SK-N-SH (cell line): ENCODE measurements at regions of chr12 and their contacts with region 1.

Region 1: GRCh38 chr12:66352197-66352596 is 49.9 kb downstream of the HELB start:
- DNase-seq: peak; percentile 41
- H3K4me3 ChIP-seq: no peak overlapping the region; a peak in 1 of 4 replicates
- H3K27ac ChIP-seq: no peak overlapping the region
- H3K4me1 ChIP-seq: peaks cover 0 to 8% of the 10 kb centered on the region in 2 experiments; a peak in 1 of 4 replicates
- H3K27me3 ChIP-seq: no peaks in the 10 kb centered on the region
- CTCF ChIP-seq: peak; percentile 53
- EP300 ChIP-seq: no peak
- RAD21 ChIP-seq: peak; percentile 78

Region 2: DNA sequence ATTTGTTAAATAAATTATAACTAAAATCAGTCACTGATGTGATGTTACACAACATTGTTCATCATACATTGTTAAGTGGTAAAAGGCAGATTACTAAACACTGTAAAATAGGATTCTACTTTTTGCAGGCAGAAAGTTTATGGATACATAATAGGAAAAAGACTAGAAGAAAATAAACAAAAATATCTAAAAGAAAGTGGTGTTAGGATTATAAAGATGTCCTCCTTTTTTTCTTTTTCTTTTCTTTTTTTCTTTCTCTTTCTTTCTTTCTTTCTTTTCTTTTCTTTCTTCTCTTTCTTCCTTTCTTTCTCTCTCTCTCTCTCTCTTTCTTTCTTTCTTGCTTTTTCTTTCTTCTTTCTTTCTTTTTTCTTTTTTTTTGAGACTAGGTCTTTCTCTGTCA is 89.5 kb before region 1 on chr12:
- CTCF ChIA-PET with region 1: no interaction called
- POLR2A ChIA-PET with region 1: no interaction called
- DNase-seq: no peak
- H3K4me3 ChIP-seq: no peak overlapping the region
- H3K27ac ChIP-seq: no peak overlapping the region
- H3K4me1 ChIP-seq: no peaks in the 10 kb centered on the region
- H3K27me3 ChIP-seq: peaks cover 4% of the 10 kb centered on the region; the same call in 1 of the 2 replicates
- CTCF ChIP-seq: no peak
- EP300 ChIP-seq: no peak
- RAD21 ChIP-seq: no peak

Region 3: GRCh38 chr12:66365718-66366490 is 13.7 kb after region 1 on chr12:
- CTCF ChIA-PET with region 1: interaction called, 16 read pairs
- POLR2A ChIA-PET with region 1: no interaction called
- DNase-seq: no peak
- H3K4me3 ChIP-seq: no peak overlapping the region
- H3K27ac ChIP-seq: no peak overlapping the region
- H3K4me1 ChIP-seq: peaks cover 0 to 21% of the 10 kb centered on the region in 2 experiments; a peak in 1 of 4 replicates
- H3K27me3 ChIP-seq: no peaks in the 10 kb centered on the region
- CTCF ChIP-seq: no peak
- EP300 ChIP-seq: no peak
- RAD21 ChIP-seq: no peak

Region 4: DNA sequence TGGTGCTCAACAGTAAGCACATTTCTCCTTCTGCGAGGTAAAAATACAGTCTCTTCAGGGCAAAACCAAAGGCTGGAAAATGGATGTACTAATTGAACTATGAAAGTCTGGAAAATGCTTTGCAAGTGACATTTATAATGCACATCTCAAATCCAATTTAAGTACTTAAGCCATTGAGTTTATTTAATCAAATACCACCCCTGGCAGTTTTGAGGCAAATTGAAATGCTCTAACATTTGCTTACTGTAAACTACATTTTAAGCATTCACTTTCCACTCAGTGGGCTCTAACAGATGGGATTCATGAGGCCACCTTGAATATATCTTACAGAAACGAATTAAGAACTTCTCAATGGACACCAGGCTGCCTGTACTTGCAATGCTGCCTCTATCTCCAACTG is 19.8 kb after region 1 on chr12:
- CTCF ChIA-PET with region 1: interaction called, 15 read pairs
- POLR2A ChIA-PET with region 1: no interaction called
- DNase-seq: peak; percentile 63
- H3K4me3 ChIP-seq: peak overlapping the region in 1 of 2 experiments; percentile 24; a peak in 1 of 4 replicates
- H3K27ac ChIP-seq: peak overlapping the region in 1 of 2 experiments; percentile 88; a peak in 2 of 4 replicates
- H3K4me1 ChIP-seq: peaks cover 0 to 24% of the 10 kb centered on the region in 2 experiments; a peak in 2 of 4 replicates
- H3K27me3 ChIP-seq: no peaks in the 10 kb centered on the region; the same call in 1 of the 2 replicates
- CTCF ChIP-seq: no peak
- EP300 ChIP-seq: peak in 1 of 2 experiments; percentile 86; a peak in 2 of 4 replicates
- RAD21 ChIP-seq: no peak; the same call in 1 of the 2 replicates

Region 5: DNA sequence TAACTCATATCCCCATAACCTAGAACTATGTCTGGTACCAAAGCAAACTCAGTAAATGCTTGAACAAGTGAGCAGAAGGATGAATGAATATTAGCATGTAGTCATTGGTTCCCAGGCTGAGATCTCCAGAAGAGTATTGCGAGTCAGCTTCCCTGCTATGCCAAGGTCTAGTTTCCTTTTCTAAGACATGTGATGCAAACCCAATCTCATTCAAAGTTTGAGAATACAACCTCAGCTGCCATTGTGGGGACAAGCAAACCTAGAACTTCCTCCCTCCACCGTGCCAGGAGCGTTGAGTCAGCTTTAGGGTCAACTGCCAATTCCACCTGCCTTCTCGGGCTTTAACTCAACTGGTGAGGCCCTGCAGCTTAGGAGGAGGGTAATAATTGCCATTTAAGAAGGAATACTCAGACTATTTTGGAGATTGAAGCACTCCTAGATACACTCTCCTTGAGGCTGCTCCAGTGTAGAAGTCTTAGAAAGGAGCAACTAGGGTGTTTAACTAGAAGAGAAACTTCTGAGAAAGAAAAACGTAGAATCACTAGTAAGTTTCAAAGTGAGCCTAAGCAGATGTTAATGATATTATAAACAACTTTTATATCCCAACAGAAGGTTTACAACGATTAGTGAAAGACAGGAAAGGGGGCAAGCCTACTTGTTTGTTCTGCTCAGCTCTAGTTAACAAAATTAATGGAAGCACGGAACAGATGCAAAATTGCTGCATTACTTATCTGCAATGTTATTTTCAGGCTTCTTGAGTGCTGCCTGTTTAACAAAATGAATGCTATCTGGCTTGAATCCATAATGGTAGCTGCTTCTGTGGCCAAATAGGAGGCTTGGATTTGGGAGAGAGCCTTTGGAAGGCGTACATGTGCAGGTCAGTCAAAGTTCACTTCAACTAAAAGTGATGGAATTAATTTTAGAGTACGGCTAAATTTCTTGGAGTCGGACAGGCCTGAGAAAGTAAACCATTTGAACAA is 47.0 kb after region 1 on chr12:
- CTCF ChIA-PET with region 1: interaction called, 22 read pairs
- POLR2A ChIA-PET with region 1: no interaction called
- DNase-seq: no peak
- H3K4me3 ChIP-seq: no peak overlapping the region
- H3K27ac ChIP-seq: peak overlapping the region in 1 of 2 experiments; percentile 79; a peak in 2 of 4 replicates
- H3K4me1 ChIP-seq: peaks cover 0 to 21% of the 10 kb centered on the region in 2 experiments; a peak in 2 of 4 replicates
- H3K27me3 ChIP-seq: no peaks in the 10 kb centered on the region
- CTCF ChIP-seq: no peak
- EP300 ChIP-seq: 0 out of 4 replicates have a peak, but pooled peaks of 1 of the 2 experiments have one; percentile 41
- RAD21 ChIP-seq: no peak

Region 6: GRCh38 chr12:66409195-66409871 is 57.1 kb after region 1 on chr12:
- CTCF ChIA-PET with region 1: interaction called, 84 read pairs
- POLR2A ChIA-PET with region 1: no interaction called
- DNase-seq: peak; percentile 24
- H3K4me3 ChIP-seq: no peak overlapping the region; a peak in 1 of 4 replicates
- H3K27ac ChIP-seq: no peak overlapping the region; a peak in 1 of 4 replicates
- H3K4me1 ChIP-seq: peaks cover 8 to 20% of the 10 kb centered on the region in 2 experiments; a peak in 3 of 4 replicates
- H3K27me3 ChIP-seq: no peaks in the 10 kb centered on the region
- CTCF ChIP-seq: peak; percentile 79
- EP300 ChIP-seq: no peak
- RAD21 ChIP-seq: peak; percentile 92

Region 7: DNA sequence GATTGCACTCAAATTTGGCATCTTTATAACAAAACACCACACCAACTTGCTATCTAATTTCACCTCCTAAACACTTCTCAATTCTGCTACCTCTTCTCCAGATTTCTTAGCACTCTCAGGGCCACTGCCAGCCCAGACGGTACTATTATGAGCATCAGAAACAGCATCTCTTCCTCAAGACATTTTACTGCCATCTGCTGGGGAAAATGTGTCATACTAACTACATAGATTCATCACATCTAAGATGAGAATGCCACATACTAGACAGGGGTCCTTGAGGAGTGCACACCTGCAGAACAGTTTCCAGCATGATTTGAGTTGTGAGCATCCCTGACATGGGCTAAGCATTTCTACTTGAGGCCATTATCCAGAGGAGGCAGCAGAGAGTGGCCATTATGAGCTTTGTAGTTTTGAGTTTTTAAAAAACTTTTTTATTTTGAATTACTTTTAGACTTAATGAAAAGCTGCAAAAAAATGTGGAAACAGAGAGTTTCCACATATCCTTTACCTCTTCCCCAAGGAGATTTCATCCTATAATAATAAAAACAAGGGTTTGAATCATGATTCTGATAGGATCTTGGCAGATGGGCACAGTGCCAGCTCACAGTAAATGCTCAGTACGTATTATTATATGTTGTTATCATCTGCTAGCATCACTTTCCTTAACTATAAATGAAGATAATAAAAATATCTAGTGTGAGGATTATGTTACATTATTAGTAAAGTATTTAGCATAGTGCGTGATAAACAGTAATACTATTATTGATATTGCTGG is 341.9 kb after region 1 on chr12:
- CTCF ChIA-PET with region 1: interaction called, 24 read pairs
- POLR2A ChIA-PET with region 1: no interaction called
- DNase-seq: peak; percentile 15
- H3K4me3 ChIP-seq: no peak overlapping the region
- H3K27ac ChIP-seq: no peak overlapping the region
- H3K4me1 ChIP-seq: no peaks in the 10 kb centered on the region
- H3K27me3 ChIP-seq: peaks cover 14% of the 10 kb centered on the region; the same call in 1 of the 2 replicates
- CTCF ChIP-seq: peak; percentile 75
- EP300 ChIP-seq: no peak
- RAD21 ChIP-seq: peak; percentile 71